ENCODE measurements at regions of chr12 and their contacts with region 1.

Region 1: GRCh38 chr12:38316391-38317129 is at the start of gene ALG10B:
- DNase-seq: peak; percentile 96
- H3K4me3 ChIP-seq: peak within 1 kb of the TSS; percentile 68 to 88 (median 87)
- H3K27ac ChIP-seq: peak within 1 kb of the TSS; percentile 99
- H3K4me1 ChIP-seq: peaks cover 7% of the 10 kb centered on the region
- H3K27me3 ChIP-seq: no peaks in the 10 kb centered on the region
- CTCF ChIP-seq: peak; percentile 50 to 56
- POLR2A ChIP-seq: peak; percentile 83
- total RNA-seq, gene ALG10B: 6.3 and 9.0 TPM in 2 replicates

Region 2: DNA sequence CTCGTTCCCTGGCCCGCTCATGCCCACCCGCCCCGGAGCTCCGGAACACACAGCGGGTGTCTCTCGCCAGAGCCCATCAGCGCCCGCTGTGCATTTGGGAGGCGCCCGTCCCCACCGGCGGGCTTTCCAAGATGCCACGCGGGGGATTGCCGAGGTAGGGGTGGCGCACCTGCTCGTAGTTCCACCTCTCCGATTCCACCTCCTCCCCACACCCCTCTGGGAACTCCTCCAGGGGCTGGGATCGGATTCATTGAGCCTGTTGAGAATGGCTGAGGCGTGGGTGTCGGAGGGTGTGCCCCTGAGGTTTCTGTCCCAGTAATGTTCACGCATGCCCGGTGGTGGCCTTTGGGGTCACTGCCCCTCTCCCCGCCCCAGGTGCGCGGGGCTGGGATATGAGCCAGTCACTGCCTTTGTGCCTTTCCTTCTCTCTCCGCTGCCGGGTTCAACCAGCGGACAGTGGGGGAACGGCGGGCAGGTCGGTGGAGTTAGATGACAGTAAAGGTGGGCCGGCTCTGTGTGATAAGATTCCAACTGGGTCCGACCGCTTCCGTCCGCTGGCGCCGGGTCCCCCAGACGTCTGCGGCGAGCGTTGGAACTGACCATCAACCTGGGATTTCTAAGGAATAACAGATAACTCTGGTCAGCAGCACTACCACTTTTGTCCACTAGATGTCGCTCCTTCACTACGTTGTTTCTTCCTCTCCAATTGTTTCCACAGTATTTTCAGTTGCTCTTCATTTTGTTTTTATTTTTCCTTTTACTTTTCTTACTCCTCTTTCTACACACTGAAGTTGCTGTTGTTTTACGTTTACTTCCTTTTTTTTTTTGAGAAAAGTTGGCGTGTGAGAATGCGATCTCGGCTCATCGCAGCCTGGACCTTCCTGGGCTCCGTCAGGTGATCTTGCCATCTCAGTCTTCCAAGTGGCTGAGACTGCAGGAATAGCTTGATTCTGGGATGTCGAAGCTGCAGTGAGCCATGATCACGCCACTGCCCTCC is 178.0 kb before region 1 on chr12:
- CTCF ChIA-PET with region 1: interaction called, 15 read pairs
- POLR2A ChIA-PET with region 1: no interaction called
- dilution Hi-C with region 1: no loop called
- intact Hi-C with region 1: loop called (anchors 1 kb)
- DNase-seq: peak; percentile 72
- H3K4me3 ChIP-seq: peak overlapping the region in 1 of 3 experiments; percentile 27
- H3K27ac ChIP-seq: no peak overlapping the region
- H3K4me1 ChIP-seq: no peaks in the 10 kb centered on the region
- H3K27me3 ChIP-seq: no peaks in the 10 kb centered on the region
- CTCF ChIP-seq: peak; percentile 84 to 89
- POLR2A ChIP-seq: no peak